ENCODE measurements at regions of chr5 and their contacts with region 1.

Region 1: GRCh38 chr5:149114403-149115312 is 26.6 kb upstream of the ABLIM3 start:
- DNase-seq: peak in 1 of 2 experiments; percentile 60
- H3K4me3 ChIP-seq: no peak overlapping the region
- H3K27ac ChIP-seq: no peak overlapping the region
- H3K4me1 ChIP-seq: no peaks in the 10 kb centered on the region
- H3K27me3 ChIP-seq: no peaks in the 10 kb centered on the region
- CTCF ChIP-seq: peak; percentile 63 to 96 (median 84)
- EP300 ChIP-seq: no peak
- POLR2A ChIP-seq: no peak
- RAD21 ChIP-seq: peak; percentile 90 to 97

Region 2: DNA sequence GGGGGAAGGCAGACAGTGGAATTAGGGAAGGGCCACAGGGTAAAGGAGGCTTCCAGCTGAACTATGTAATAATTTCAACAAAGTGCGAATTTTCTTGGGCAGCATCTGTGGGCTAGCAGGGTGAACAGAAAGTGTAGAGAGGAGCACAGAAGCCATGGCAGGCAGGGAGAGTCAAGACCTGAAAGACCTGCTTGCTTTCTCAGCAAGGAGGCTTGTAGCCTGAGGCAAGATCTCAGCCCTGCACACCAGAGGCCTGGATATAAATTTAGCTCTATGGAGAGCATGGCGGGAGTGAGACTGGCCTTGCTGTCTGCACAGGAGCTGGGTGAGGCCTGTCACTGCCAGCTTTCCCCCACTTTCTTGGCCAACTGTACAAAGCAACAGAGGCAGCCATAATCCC is 19.7 kb before region 1 on chr5:
- CTCF ChIA-PET with region 1: interaction called, 10 read pairs
- POLR2A ChIA-PET with region 1: no interaction called
- DNase-seq: no peak
- H3K4me3 ChIP-seq: no peak overlapping the region
- H3K27ac ChIP-seq: no peak overlapping the region
- H3K4me1 ChIP-seq: no peaks in the 10 kb centered on the region
- H3K27me3 ChIP-seq: no peaks in the 10 kb centered on the region
- CTCF ChIP-seq: no peak
- EP300 ChIP-seq: no peak
- POLR2A ChIP-seq: no peak
- RAD21 ChIP-seq: no peak

Region 3: DNA sequence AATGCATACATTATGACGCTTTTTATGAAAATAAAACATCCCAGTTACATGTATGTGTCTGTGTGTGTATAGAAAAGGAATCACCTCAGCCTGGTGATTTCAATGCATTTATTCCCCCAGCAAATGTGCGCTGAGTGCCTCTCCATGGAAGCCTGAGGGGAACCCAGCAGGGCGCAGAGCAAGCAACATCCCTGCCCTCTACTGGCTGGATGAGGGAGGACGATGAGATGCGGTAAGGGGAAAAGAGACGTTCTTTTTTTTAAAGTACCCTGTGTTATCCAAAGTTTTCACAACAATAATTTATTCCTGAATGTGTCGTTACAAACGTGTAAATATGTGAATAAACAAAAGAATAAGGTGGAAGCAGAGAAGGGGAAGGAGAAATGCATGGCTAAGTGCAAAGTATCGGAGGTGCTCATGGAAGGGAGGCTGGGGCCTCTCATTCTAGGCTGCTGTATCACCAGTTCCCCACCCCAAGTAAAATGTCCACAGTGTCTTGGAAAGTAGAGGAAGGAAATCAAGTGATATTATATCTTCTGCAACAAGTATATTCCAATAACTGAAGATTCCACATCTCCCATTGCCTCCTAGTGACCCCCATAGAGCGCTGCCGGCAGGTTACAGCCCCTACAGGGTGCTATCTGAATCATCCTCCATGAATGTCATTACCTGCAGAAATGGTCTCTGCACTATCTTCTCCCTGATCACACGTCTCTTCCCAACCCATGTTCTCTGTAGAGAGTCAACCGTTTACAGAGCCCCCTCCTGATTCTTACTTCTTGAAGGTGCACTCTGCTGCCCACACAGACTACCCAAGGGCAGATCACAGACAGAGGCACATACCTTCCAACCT is 13.6 kb after region 1 on chr5:
- CTCF ChIA-PET with region 1: interaction called, 68 read pairs
- POLR2A ChIA-PET with region 1: no interaction called
- DNase-seq: peak in 1 of 2 experiments; percentile 66
- H3K4me3 ChIP-seq: no peak overlapping the region
- H3K27ac ChIP-seq: no peak overlapping the region
- H3K4me1 ChIP-seq: peaks cover 0 to 9% (median 0%) of the 10 kb centered on the region in 4 experiments; a peak in 3 of 7 replicates
- H3K27me3 ChIP-seq: no peaks in the 10 kb centered on the region
- CTCF ChIP-seq: peak; percentile 76 to 84 (median 84)
- EP300 ChIP-seq: no peak
- POLR2A ChIP-seq: no peak
- RAD21 ChIP-seq: peak; percentile 56 to 64

Region 4: DNA sequence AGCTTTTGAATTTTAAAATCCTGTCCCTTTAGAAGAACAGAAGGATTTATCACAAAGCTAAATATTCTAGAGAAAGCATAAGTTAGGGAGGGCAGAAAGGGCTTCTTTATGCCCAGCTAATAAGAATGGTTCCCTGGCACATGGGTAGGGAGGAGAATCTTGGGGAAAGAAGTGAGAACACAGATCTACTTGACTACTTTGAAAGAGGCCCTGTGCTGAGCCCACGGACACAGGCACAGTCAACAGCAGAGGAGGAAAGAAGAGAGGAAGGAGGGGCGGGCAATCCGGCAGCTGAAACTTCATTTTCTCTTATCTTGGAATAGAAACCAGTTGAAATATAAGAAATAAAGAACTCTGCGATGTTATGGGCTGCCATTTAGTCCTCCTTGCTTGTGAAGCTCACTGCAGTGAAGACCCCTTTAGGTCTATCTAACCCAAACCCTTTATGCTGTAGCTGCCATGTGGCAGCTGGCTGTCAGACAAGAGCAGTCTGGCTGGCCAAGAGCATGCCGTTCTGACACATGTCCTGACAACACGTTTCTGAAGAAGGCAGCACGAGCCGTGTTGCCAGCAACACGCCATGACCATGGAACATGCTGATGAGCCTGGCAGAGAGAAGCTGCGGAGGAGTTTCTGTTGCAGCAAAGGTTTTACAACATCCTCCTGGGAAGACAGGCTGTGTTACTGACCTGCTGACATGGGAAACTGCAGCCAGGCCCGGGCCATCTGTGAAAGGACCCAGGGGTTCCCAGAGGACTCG is 60.9 kb after region 1 on chr5:
- CTCF ChIA-PET with region 1: no interaction called
- POLR2A ChIA-PET with region 1: no interaction called
- DNase-seq: no peak
- H3K4me3 ChIP-seq: no peak overlapping the region
- H3K27ac ChIP-seq: no peak overlapping the region
- H3K4me1 ChIP-seq: peaks cover 0 to 5% (median 1%) of the 10 kb centered on the region in 4 experiments; a peak in 1 of 7 replicates
- H3K27me3 ChIP-seq: peaks cover 0 to 2% (median 0%) of the 10 kb centered on the region in 4 experiments; a peak in 1 of 7 replicates
- CTCF ChIP-seq: no peak
- EP300 ChIP-seq: no peak
- POLR2A ChIP-seq: no peak
- RAD21 ChIP-seq: no peak

Region 5: GRCh38 chr5:149247726-149248125 is 133.1 kb after region 1 on chr5:
- CTCF ChIA-PET with region 1: no interaction called
- POLR2A ChIA-PET with region 1: no interaction called
- DNase-seq: no peak
- H3K4me3 ChIP-seq: no peak overlapping the region
- H3K27ac ChIP-seq: no peak overlapping the region
- H3K4me1 ChIP-seq: no peaks in the 10 kb centered on the region
- H3K27me3 ChIP-seq: no peaks in the 10 kb centered on the region
- CTCF ChIP-seq: no peak
- EP300 ChIP-seq: no peak
- POLR2A ChIP-seq: no peak
- RAD21 ChIP-seq: no peak